Colonic mucosa (tissue), 4 donors: ENCODE measurements at regions of chr20 and their contacts with region 1.

Region 1: DNA sequence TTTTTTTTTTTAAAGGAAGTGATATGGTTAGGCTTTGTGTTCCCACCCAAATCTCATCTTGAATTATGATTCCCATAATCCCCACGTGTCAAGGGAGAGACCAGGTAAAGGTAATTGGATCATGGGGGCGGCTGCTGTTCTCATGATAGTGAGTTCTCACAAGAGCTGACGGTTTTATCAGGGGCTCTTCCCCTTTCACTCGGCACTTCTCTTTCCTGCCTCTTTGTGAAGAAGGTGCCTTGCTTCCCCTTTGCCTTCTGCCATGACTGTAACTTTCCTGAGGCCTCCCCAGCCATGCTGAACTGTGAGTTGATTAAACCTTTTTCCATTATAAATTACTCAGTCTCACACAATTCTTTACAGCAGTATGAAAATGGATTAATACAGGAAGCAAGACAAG is 64.3 kb downstream of the ZFP64 start:
- DNase-seq: no peak
- H3K4me3 ChIP-seq: no peak overlapping the region
- H3K27ac ChIP-seq: no peak overlapping the region
- H3K4me1 ChIP-seq: no peaks in the 10 kb centered on the region
- H3K27me3 ChIP-seq: no peaks in the 10 kb centered on the region
- CTCF ChIP-seq: no peak

Region 2: DNA sequence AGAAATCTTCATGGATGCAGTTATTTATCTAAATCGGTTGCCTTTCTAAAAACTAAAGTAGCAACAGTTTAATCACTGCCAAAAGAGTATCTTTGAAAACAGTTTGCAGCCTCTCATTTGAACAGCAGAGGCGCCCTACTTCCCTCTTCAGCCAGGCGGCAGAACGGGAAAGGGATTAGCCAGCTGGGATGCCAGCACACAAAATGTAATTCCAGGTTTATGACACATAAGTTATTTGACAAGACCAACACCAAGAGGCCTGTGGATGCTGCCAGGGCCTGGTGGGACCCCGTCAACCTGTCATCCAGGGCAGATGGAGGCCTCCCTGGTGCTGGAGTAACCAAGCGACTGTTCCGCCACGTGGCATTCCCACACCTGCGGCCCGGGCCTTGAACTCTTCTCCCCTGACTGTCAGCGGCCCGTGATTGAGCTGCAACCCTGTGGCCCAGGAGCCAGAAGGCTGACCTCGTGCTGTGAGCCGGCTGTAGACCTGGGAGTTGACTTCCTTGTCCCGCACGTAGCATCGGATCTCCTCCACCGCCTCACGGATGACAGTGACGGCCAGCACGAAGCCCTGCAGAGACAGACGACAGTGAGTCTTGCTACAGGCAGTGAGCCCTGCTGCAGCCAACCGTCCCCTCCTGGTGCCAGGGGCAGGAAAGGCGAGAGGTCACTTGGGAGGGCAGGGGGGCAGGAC is 414.7 kb before region 1 on chr20:
- intact Hi-C with region 1: no loop called
- DNase-seq: no peak
- H3K4me3 ChIP-seq: no peak overlapping the region
- H3K27ac ChIP-seq: no peak overlapping the region
- H3K4me1 ChIP-seq: no peaks in the 10 kb centered on the region
- H3K27me3 ChIP-seq: no peaks in the 10 kb centered on the region
- CTCF ChIP-seq: peak; percentile 32

Region 3: DNA sequence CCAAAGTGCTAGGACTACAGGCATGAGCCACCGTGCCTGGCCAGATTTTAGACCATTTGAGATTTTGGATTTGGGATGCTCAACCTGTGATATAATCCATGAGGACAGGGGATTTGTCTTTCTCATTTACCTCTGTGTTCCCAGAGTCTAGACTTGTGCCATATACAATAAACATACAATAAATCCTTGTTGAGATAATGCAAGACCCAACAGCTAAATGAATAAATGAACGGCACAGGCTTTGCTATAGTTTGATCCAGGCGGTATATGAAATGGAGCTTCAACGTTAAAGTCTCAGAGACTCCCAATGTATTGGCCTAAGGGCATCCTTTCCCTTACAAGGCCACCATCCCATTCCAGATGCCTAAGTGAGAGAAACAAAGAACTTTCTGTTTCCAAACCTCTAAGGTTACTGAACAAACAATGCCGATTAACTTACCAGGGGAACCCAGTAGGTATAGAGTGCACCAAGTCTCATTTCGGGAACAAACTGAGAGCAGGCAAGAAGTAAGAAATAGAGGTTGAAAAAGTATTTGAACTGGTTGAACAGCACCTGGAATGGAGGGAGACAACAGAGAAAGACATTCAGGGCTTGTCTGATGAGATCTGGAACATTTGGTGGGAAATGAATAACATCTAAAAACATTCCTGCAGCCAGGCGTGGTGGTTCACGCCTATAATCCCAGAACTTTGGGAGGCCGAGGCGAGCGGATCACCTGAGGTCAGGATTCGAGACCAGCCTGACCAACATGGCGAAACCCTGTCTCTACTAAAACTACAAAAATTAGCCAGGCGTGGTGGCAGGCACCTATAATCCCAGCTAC is 401.7 kb before region 1 on chr20:
- intact Hi-C with region 1: no loop called
- DNase-seq: no peak
- H3K4me3 ChIP-seq: no peak overlapping the region
- H3K27ac ChIP-seq: no peak overlapping the region
- H3K4me1 ChIP-seq: no peaks in the 10 kb centered on the region
- H3K27me3 ChIP-seq: no peaks in the 10 kb centered on the region
- CTCF ChIP-seq: no peak

Region 4: GRCh38 chr20:52226370-52226769 is 99.1 kb after region 1 on chr20:
- intact Hi-C with region 1: loop called (anchors 10 kb)
- DNase-seq: no peak
- H3K4me3 ChIP-seq: no peak overlapping the region
- H3K27ac ChIP-seq: no peak overlapping the region
- H3K4me1 ChIP-seq: no peaks in the 10 kb centered on the region
- H3K27me3 ChIP-seq: no peaks in the 10 kb centered on the region
- CTCF ChIP-seq: no peak

Region 5: GRCh38 chr20:52242237-52243230 is 115.2 kb after region 1 on chr20:
- intact Hi-C with region 1: no loop called
- DNase-seq: no peak
- H3K4me3 ChIP-seq: no peak overlapping the region
- H3K27ac ChIP-seq: no peak overlapping the region
- H3K4me1 ChIP-seq: no peaks in the 10 kb centered on the region
- H3K27me3 ChIP-seq: no peaks in the 10 kb centered on the region
- CTCF ChIP-seq: peak; percentile 61

Region 6: GRCh38 chr20:52379723-52380336 is 252.5 kb after region 1 on chr20:
- intact Hi-C with region 1: loop called (anchors 5 kb)
- DNase-seq: peak; percentile 43
- H3K4me3 ChIP-seq: no peak overlapping the region
- H3K27ac ChIP-seq: no peak overlapping the region
- H3K4me1 ChIP-seq: no peaks in the 10 kb centered on the region
- H3K27me3 ChIP-seq: no peaks in the 10 kb centered on the region
- CTCF ChIP-seq: peak; percentile 91

Region 7: DNA sequence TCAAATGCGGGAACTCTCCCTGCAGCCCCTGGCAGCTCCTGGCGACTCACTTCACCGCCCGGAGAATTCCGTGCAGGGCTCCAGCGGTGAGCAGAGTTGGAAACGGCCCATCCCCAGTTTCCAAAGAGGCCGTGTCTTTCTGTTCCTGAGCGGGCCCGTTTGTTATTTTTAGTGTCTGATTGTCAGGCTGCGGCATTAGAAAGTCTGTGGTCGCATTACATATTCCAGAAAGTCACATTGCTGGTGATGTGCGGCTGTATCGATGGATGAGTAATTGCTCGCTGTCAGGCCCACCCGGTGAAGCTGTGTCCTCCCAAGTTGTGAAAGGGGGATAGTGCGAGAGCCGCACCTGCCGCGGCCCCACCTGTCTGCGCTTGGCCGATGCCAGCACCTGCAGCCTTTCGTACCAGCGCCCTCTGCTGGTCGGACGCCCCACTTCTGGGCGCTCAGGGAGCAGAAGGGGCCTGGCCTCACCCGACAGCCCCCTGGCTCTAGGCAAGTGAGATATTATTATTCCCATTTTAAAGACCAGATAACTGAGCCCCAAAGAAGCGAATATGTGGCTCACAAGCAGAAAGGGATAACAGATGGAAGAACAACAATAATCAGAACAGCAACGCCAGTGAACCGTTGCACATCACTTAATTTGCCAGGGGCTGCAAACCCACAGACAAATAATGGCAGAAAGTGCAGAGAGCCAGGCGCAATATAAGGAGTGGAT is 1089.7 kb after region 1 on chr20:
- intact Hi-C with region 1: loop called (anchors 10 kb)
- DNase-seq: peak; percentile 74
- H3K4me3 ChIP-seq: no peak overlapping the region
- H3K27ac ChIP-seq: no peak overlapping the region
- H3K4me1 ChIP-seq: peaks cover 3% of the 10 kb centered on the region
- H3K27me3 ChIP-seq: no peaks in the 10 kb centered on the region
- CTCF ChIP-seq: peak; percentile 83